CD8-positive, alpha-beta T cell (primary cell): ENCODE measurements at regions of chrX and their contacts with region 1.

Region 1: DNA sequence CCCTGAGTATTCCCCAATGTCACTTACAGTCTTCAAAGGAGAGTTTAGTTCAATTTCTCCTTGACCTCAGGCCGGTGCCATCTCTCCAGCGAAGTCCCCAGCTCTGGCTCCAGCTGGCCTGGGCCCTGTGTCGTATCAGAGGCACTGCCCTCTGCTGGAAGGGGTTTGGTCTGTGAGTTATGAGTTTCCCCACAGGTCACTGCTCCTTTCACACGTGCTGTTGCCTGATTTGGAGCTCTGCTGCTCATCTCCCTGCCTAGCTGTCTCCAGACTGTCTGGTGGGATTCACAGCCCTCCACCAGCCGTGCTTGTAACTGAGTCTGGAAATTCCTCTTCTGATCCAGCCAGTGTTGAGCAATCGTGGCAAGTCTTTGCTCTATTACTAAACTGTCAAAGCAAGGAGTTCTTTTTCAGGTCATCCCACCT is at the start of gene RAP2C:
- DNase-seq: peak; percentile 20 to 81 (median 56)
- ATAC-seq: no peak
- H3K4me3 ChIP-seq: peak within 1 kb of the TSS; percentile 81 to 85
- H3K4me3 Mint-ChIP-seq: peak within 1 kb of the TSS; percentile 97
- H3K27ac ChIP-seq: peak within 1 kb of the TSS; percentile 92 to 97
- H3K27ac Mint-ChIP-seq: peak within 1 kb of the TSS; percentile 95
- H3K4me1 ChIP-seq: peaks cover 20% of the 10 kb centered on the region
- H3K4me1 Mint-ChIP-seq: peaks cover 25% of the 10 kb centered on the region
- H3K27me3 ChIP-seq: no peaks in the 10 kb centered on the region
- H3K27me3 Mint-ChIP-seq: no peaks in the 10 kb centered on the region
- CTCF ChIP-seq: no peak
- total RNA-seq, gene RAP2C: 61.0 to 64.9 TPM

Region 2: DNA sequence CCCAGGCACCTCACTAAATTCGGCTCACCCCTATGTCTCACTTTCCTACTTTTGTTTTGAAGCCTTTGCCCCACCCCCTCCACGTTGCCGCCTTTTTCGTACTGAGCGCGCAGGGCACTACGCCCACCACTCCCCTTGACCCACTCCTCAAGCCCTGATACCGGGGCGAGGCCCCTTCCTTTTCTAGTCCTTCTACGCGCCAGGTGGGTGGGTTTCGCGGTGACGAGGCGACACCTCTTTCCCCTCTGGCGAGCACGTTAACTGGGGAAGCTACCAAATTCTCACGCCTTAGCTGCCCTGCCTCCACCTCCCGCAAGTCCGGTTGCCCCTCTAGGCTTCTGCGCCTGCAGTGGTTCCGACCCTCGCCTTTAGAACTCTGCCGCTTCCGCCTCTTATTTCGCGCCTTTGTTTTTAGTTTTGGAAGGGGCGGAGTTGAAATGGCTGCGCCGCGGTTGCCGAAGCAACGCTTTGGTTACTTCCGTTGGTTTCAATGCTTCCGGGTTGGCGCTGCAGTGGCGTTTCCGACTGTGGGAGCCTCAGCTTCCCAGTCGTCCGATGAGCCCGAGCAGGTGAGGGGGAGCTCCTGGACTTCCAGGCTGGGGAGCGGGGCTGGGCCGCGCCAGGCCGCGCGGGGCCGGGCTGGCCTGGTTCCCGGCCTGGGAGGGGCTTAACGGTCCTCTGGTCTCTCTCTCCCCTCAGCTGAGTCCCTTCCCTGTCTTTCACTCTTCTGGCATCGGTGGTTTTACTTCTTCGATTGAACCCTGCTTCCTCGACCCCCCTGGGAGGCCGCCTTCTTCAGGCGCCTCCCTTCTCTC is 1879.7 kb before region 1 on chrX and contains the start of gene SLC25A14:
- CTCF ChIA-PET with region 1: no interaction called
- POLR2A ChIA-PET with region 1: no interaction called
- intact Hi-C with region 1: loop called in 1 of 2 experiments (anchors 5 kb)
- DNase-seq: peak; percentile 32 to 86 (median 71)
- ATAC-seq: peak; percentile 88
- H3K4me3 ChIP-seq: peak within 1 kb of the TSS; percentile 60 to 83
- H3K4me3 Mint-ChIP-seq: peak within 1 kb of the TSS; percentile 95
- H3K27ac ChIP-seq: peak within 1 kb of the TSS; percentile 36 to 83
- H3K27ac Mint-ChIP-seq: peak within 1 kb of the TSS; percentile 83
- H3K4me1 ChIP-seq: no peaks in the 10 kb centered on the region
- H3K4me1 Mint-ChIP-seq: peaks cover 20% of the 10 kb centered on the region
- H3K27me3 ChIP-seq: no peaks in the 10 kb centered on the region
- H3K27me3 Mint-ChIP-seq: no peaks in the 10 kb centered on the region
- CTCF ChIP-seq: no peak
- total RNA-seq, gene SLC25A14: 11.9 to 13.4 TPM

Region 3: GRCh38 chrX:131854581-131854980 is 364.8 kb before region 1 on chrX:
- CTCF ChIA-PET with region 1: interaction called, 3 read pairs
- POLR2A ChIA-PET with region 1: no interaction called
- intact Hi-C with region 1: loop called in 1 of 2 experiments (anchors 1 kb)
- DNase-seq: peak in 2 of 9 experiments; percentile 38 to 50
- ATAC-seq: no peak
- H3K4me3 ChIP-seq: no peak overlapping the region
- H3K4me3 Mint-ChIP-seq: no peak overlapping the region
- H3K27ac ChIP-seq: no peak overlapping the region
- H3K27ac Mint-ChIP-seq: no peak overlapping the region
- H3K4me1 ChIP-seq: no peaks in the 10 kb centered on the region
- H3K4me1 Mint-ChIP-seq: no peaks in the 10 kb centered on the region
- H3K27me3 ChIP-seq: no peaks in the 10 kb centered on the region
- H3K27me3 Mint-ChIP-seq: no peaks in the 10 kb centered on the region
- CTCF ChIP-seq: no peak

Region 4: DNA sequence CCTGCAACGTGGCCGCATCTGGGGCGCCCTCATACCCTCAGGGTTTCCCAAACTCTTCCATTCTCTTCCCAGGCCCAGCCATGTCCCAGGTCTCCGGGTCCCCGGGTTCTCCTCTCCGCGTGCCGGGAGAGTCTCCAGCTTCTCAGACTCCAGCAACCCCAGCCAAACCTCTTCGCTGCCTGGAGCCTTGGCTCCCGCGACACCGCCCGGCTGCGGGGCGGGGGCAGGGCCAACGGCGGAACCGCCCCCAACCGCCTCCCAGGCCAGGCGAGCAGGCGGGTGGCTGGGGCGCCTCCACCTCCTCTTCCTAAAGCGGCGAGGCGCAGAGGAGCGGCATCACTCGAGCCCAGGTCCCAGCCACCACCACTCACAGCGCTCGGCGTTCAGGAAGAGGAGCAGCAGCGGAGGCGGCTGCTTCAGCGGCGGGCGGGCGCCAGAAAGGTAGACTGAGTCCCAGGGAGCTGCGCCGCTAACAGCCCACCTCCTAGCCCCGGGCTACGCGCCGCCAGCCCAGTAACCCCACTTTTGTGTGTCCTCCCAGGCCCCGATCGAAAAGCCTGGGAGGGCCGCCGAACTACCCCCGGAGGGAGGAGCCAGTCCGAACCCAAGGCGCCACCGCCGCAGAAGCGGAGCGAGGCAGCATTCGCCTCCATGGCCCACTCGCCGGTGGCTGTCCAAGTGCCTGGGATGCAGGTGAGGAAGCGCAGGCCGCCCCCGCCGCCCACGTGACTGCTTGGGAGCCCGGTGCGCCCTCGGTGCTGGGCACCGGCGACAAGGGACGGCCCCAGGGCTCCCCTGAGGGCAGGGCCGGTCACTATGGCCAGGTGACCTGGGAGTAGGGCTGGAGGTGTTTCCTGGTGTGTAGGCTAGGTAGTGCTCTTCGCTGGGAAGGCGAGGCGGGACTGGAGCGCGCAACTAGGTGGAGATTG is 196.1 kb before region 1 on chrX and contains the start of gene STK26:
- CTCF ChIA-PET with region 1: interaction called, 3 read pairs
- POLR2A ChIA-PET with region 1: interaction called, 5 read pairs
- intact Hi-C with region 1: loop called (anchors 1 to 2 kb)
- DNase-seq: peak; percentile 51 to 88 (median 75)
- ATAC-seq: peak; percentile 87
- H3K4me3 ChIP-seq: peak within 1 kb of the TSS; percentile 84 to 87
- H3K4me3 Mint-ChIP-seq: peak within 1 kb of the TSS; percentile 93
- H3K27ac ChIP-seq: peak within 1 kb of the TSS; percentile 79 to 80
- H3K27ac Mint-ChIP-seq: peak within 1 kb of the TSS; percentile 93
- H3K4me1 ChIP-seq: peaks cover 35% of the 10 kb centered on the region
- H3K4me1 Mint-ChIP-seq: peaks cover 40% of the 10 kb centered on the region
- H3K27me3 ChIP-seq: no peaks in the 10 kb centered on the region
- H3K27me3 Mint-ChIP-seq: no peaks in the 10 kb centered on the region
- CTCF ChIP-seq: no peak
- total RNA-seq, gene STK26: 33.8 to 34.1 TPM

Region 5: DNA sequence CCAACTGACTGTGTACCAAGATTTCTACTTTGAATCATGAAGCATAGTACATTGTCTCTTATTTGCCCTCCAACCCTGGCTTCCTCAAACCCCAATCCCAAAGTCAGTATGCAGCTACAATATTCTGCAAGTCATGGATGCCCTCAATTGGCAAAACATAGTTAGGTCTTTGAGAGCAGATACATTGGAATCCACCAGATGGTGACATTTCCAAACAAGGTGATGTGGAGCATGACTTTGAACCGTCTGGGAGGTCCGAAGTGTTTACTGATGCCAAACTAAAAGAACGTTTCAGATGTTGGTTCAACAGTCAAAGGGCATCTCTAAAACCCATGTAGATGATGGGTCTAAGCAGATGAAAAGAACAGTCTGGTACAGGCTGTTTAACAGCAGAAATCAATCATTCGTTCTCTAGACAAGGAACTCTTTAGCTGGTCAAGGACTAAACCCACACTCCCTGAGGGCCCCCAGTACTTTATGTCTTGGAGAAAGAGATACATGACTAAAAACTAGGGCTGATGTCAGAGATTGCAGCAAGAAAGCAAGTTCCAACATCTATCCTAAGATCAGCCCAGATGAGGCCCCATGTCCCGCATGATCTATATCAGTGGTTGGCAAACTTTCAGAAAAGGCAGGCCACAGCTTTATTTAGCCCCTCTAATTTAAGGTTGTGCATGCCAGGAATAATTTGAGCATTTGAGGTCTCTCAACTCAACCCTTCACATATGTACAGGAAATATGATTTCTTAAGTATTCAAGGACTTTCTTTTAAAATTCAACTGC is 47.7 kb before region 1 on chrX:
- CTCF ChIA-PET with region 1: interaction called, 4 read pairs
- POLR2A ChIA-PET with region 1: no interaction called
- intact Hi-C with region 1: loop called in 1 of 2 experiments (anchors 2 kb)
- DNase-seq: peak in 2 of 9 experiments; percentile 2 to 4
- ATAC-seq: no peak
- H3K4me3 ChIP-seq: no peak overlapping the region
- H3K4me3 Mint-ChIP-seq: no peak overlapping the region
- H3K27ac ChIP-seq: no peak overlapping the region
- H3K27ac Mint-ChIP-seq: no peak overlapping the region
- H3K4me1 ChIP-seq: no peaks in the 10 kb centered on the region
- H3K4me1 Mint-ChIP-seq: no peaks in the 10 kb centered on the region
- H3K27me3 ChIP-seq: no peaks in the 10 kb centered on the region
- H3K27me3 Mint-ChIP-seq: peaks cover 3% of the 10 kb centered on the region
- CTCF ChIP-seq: no peak

Region 6: DNA sequence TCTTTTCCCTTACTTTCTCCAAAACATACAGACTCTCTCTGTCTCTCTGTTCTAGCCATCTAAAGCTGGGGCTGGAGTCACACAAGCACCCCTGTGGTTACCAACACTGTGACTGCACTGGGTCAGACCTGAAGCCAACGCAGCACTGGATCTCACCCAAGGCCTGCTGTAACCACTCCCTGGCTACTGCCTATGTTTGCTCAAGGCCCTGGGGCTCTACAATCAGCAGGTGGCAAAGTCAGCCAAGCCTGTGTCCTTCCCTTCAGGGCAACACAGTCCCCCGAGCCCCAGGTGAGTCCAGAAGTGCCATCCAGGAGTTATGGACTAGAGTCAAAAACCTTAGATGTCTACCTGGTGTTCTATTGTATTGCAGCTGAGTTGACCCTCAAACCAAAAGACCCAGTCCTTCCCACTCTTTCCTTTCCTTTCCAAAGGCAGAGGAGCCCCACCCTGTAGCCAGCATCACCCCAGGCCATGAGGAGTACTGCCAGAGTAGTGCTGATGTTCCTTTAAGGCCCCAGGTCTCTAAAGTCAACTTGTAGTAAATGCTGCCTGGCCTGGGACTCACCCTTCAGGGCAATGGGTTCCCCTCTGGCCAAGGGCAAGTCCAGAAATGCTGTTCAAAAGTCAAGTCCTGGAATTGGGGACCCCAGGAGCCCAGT is 58.7 kb after region 1 on chrX:
- CTCF ChIA-PET with region 1: no interaction called
- POLR2A ChIA-PET with region 1: no interaction called
- intact Hi-C with region 1: no loop called
- DNase-seq: no peak
- ATAC-seq: no peak
- H3K4me3 ChIP-seq: no peak overlapping the region
- H3K4me3 Mint-ChIP-seq: no peak overlapping the region
- H3K27ac ChIP-seq: no peak overlapping the region
- H3K27ac Mint-ChIP-seq: no peak overlapping the region
- H3K4me1 ChIP-seq: no peaks in the 10 kb centered on the region
- H3K4me1 Mint-ChIP-seq: no peaks in the 10 kb centered on the region
- H3K27me3 ChIP-seq: no peaks in the 10 kb centered on the region
- H3K27me3 Mint-ChIP-seq: no peaks in the 10 kb centered on the region
- CTCF ChIP-seq: no peak